IMR-90 (cell line): ENCODE measurements at regions of chr7 and their contacts with region 1.

Region 1: GRCh38 chr7:135170274-135170997 is at the start of gene CYREN:
- DNase-seq: peak; percentile 93
- ATAC-seq: peak; percentile 94
- H3K4me3 ChIP-seq: peak within 1 kb of the TSS; percentile 91
- H3K27ac ChIP-seq: peak within 1 kb of the TSS; percentile 96
- H3K4me1 ChIP-seq: peaks cover 12% of the 10 kb centered on the region
- H3K27me3 ChIP-seq: no peaks in the 10 kb centered on the region
- CTCF ChIP-seq: peak; percentile 83
- POLR2A ChIP-seq: peak; percentile 75
- RAD21 ChIP-seq: peak; percentile 75
- total RNA-seq, gene CYREN: 26.5 and 33.1 TPM in 2 replicates

Region 2: GRCh38 chr7:134962270-134962780 is 208.1 kb before region 1 on chr7:
- CTCF ChIA-PET with region 1: no interaction called
- POLR2A ChIA-PET with region 1: no interaction called
- dilution Hi-C with region 1: no loop called
- in situ Hi-C with region 1: no loop called
- intact Hi-C with region 1: loop called (anchors 2 kb)
- DNase-seq: no peak
- ATAC-seq: no peak
- H3K4me3 ChIP-seq: no peak overlapping the region
- H3K27ac ChIP-seq: no peak overlapping the region
- H3K4me1 ChIP-seq: no peaks in the 10 kb centered on the region
- H3K27me3 ChIP-seq: no peaks in the 10 kb centered on the region
- CTCF ChIP-seq: no peak
- POLR2A ChIP-seq: no peak
- RAD21 ChIP-seq: no peak

Region 3: DNA sequence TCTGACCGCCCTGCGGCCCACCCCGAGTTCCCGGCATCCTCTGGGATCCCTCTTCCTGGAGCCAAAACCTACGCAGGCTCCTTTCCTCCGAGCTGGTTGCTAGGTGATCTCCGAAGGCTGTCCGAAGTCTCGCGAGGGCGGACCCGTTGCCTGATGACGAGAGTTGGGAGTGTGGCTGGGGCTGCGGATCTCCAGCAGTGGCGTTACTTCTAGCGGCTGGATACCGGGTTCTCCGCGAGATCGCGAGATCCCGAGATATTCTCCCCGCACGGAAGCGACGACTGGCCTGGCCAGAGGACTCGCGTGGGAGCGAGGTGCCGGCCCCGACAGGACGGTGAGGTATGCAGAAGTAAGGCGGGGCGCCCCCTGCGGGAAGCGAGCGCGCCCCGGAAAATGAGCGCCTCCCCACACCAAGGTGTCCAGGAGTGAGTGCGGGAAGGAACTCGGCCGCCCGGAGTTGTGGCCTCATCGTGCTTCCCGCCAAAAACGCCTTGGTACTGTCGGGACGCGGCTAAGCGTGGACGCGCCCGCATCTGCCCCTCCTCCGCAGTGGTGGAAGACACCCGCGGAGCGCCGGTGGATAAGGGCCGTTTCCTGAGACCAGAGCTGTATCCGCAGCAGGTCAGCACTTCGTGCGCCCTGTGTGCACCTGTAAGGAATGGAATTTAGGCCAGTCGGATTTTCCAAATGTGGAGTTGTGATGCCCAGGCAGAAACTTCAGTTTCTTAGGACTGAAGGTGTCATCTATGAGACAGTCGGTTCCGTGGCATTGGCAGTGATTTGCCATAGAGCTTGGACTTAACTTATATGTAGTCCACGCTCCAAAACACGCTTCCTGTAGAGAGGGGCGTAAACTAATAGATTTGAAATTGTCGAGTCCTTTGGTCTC is 183.8 kb before region 1 on chr7 and contains the start of gene AGBL3:
- CTCF ChIA-PET with region 1: interaction called, 17 read pairs
- POLR2A ChIA-PET with region 1: no interaction called
- dilution Hi-C with region 1: no loop called
- in situ Hi-C with region 1: loop called (anchors 10 kb)
- intact Hi-C with region 1: loop called (anchors 2 kb)
- DNase-seq: peak; percentile 94
- ATAC-seq: peak; percentile 98
- H3K4me3 ChIP-seq: peak within 1 kb of the TSS; percentile 72
- H3K27ac ChIP-seq: peak within 1 kb of the TSS; percentile 83
- H3K4me1 ChIP-seq: peaks cover 3% of the 10 kb centered on the region
- H3K27me3 ChIP-seq: no peaks in the 10 kb centered on the region
- CTCF ChIP-seq: peak; percentile 51
- POLR2A ChIP-seq: no peak
- RAD21 ChIP-seq: no peak
- total RNA-seq, gene AGBL3: 0.18 and 0.28 TPM in 2 replicates